Activated naive CD4-positive, alpha-beta T cell treated with anti-CD3 and anti-CD28 coated beads for 36 hours (primary cell): ENCODE measurements at regions of chr6 and their contacts with region 1.

Region 1: GRCh38 chr6:34027445-34027936 is 118.4 kb downstream of the GRM4 start:
- DNase-seq: peak; percentile 63
- H3K4me3 Mint-ChIP-seq: no peak overlapping the region
- H3K27ac Mint-ChIP-seq: no peak overlapping the region
- H3K4me1 Mint-ChIP-seq: no peaks in the 10 kb centered on the region
- H3K27me3 Mint-ChIP-seq: no peaks in the 10 kb centered on the region

Region 2: GRCh38 chr6:33771146-33772081 is 256.1 kb before region 1 on chr6:
- CTCF ChIA-PET with region 1: interaction called, 66 read pairs
- intact Hi-C with region 1: loop called (anchors 1 kb)
- DNase-seq: peak; percentile 63
- H3K4me3 Mint-ChIP-seq: no peak overlapping the region
- H3K27ac Mint-ChIP-seq: no peak overlapping the region
- H3K4me1 Mint-ChIP-seq: peaks cover 3% of the 10 kb centered on the region
- H3K27me3 Mint-ChIP-seq: no peaks in the 10 kb centered on the region